HEK293 (cell line): ENCODE measurements at regions of chr1 and their contacts with region 1.

Region 1: DNA sequence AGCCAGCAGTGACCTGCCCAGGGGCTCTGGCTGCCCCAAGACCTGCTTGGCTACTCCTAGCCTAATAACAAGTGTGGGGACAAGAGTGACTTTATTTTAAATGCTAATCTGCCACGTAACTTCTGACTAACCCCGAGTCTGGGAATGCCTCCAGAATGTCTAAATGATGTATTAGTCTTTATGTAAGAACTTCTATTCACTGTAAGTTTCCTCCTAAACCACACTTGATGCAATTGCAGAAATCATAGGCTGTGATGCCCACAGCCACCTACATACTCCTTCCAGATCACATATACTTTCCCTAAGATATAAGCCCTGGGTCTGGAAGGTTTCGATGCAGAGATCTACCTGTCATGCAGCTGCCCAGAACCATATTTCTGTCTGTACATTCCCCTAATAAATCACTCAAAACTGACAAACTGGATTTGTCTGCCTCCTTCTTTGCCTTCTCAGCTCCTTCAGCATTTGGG is 5.9 kb upstream of the VPS45 start:
- H3K4me3 ChIP-seq: no peak overlapping the region
- H3K27ac ChIP-seq: no peak overlapping the region
- H3K4me1 ChIP-seq: peaks cover 6% of the 10 kb centered on the region
- CTCF ChIP-seq: no peak

Region 2: DNA sequence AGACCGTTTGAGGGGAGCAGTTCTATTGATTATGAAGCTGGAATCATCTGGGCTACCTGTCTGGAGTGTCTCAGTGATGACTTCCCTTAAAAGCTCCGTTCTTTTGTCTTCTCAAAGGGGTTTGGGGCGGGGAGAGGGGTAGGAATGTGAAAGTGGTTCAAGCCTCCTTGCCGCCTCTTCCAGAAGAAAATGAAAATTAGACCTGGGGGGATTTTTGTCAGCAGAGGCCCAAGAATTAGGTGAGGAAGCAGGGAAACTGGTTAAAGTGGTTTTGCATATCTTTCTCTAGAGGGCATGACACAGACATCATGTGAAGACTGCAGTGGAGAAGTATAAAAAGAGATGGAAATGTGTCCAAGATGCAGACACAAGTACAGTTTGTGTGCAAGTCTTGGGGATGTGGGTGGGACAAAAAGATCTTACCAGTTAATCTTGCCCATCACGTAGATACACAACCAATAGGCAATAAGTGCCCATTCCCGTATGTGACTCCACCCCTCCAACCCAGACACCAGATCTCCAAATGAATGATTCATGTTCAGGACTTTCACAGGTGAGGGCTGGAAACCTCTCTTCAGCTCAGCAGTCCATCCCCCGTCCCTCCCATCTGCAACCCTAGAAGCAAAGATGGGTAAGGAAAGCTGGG is 124.5 kb before region 1 on chr1:
- CTCF ChIA-PET with region 1: interaction called, 10 read pairs
- POLR2A ChIA-PET with region 1: interaction called, 3 read pairs
- H3K4me3 ChIP-seq: peak overlapping the region; percentile 57
- H3K27ac ChIP-seq: peak overlapping the region; percentile 33; the same call in 1 of the 2 replicates
- H3K4me1 ChIP-seq: peaks cover 6% of the 10 kb centered on the region; the same call in 1 of the 2 replicates
- CTCF ChIP-seq: no peak

Region 3: DNA sequence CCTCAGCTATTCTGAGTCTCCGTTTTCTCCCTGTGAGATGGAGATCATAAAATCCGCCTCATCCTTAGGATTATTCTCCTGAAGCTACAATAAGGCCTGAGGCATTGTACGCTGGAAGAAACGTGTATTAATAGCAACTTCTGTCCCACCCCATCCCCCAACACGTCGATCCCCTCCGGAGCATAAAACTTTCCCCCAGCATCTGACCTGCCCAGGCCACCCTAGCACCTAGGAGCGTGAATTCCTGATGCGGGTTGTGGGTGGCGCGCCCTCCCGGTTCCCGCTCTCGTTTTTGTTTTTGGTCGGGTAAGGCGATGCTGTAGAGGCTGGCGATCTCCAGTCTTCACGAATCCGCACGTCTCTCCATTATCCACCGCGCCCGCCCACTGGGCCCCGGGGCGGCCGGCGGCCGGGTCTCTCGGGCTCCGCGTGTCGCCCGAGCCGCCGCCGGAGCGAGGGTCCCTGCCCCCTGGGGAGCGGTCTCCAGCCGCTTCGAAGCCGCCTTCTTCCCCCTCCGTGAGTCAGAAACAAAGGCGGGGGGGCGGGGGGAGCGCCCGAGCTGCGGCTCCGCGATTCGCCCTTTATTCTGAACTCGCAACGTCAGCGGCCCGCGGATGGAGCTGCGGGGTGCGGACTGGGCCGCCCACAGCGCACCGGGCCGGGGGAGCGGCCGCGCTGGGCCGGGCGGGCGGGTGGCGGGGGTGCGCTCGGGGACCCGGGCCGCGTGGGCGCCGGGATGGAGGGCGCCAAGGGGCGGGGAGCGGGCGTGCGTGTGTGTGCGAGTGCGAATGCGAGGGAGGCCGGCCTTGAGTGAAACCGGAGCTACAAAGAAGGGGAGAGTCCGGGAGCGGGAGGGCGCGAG is 87.8 kb after region 1 on chr1 and contains the start of gene PLEKHO1:
- CTCF ChIA-PET with region 1: no interaction called
- POLR2A ChIA-PET with region 1: no interaction called
- H3K4me3 ChIP-seq: peak within 1 kb of the TSS; percentile 61
- H3K27ac ChIP-seq: peak within 1 kb of the TSS; percentile 62; the same call in 1 of the 2 replicates
- H3K4me1 ChIP-seq: peaks cover 3% of the 10 kb centered on the region; the same call in 1 of the 2 replicates
- CTCF ChIP-seq: no peak